ENCODE measurements at regions of chr17 and their contacts with region 1.

Region 1: DNA sequence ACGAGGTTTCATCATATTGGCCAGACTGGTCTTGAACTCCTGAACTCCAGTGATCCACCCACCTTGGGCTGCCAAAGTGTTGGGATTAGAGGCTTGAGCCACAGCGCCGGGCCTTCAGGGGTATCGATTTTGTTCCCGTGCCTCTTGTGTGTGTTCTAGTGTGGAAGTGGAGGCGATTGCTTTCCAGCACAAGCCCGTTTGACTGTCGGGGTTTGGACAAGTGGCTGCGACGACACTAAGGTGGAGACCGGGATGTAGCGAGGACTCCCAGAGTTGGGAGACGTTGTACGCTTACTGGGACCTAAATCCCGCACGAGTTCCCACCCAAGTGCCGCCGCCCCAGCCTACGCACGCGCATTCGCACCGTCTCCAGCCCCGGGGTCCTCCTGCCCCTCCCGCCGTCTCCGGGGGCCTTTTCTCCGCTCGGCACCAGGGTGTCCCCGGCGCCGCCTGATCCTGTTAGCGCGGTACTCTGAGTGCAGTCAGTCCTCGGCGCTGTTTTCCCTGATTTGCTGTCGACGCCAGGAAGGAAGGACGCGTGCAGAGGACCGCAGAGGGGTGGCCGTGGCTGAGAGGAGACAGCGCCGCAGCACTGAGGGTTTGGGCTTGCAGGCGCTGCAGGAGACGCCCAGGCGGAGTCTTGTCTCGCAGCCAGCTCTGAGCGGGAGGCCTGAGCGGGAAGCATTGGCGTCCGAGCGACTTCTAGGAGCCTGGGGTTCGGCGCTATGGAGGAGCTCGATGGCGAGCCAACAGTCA is at the start of gene NUP85:
- DNase-seq: peak; percentile 72
- ATAC-seq: peak; percentile 93
- H3K4me3 ChIP-seq: peak within 1 kb of the TSS; percentile 89 to 95
- H3K27ac ChIP-seq: peak within 1 kb of the TSS; percentile 95
- H3K4me1 ChIP-seq: no peaks in the 10 kb centered on the region
- H3K27me3 ChIP-seq: no peaks in the 10 kb centered on the region
- CTCF ChIP-seq: no peak
- total RNA-seq, gene NUP85: 141 TPM

Region 2: DNA sequence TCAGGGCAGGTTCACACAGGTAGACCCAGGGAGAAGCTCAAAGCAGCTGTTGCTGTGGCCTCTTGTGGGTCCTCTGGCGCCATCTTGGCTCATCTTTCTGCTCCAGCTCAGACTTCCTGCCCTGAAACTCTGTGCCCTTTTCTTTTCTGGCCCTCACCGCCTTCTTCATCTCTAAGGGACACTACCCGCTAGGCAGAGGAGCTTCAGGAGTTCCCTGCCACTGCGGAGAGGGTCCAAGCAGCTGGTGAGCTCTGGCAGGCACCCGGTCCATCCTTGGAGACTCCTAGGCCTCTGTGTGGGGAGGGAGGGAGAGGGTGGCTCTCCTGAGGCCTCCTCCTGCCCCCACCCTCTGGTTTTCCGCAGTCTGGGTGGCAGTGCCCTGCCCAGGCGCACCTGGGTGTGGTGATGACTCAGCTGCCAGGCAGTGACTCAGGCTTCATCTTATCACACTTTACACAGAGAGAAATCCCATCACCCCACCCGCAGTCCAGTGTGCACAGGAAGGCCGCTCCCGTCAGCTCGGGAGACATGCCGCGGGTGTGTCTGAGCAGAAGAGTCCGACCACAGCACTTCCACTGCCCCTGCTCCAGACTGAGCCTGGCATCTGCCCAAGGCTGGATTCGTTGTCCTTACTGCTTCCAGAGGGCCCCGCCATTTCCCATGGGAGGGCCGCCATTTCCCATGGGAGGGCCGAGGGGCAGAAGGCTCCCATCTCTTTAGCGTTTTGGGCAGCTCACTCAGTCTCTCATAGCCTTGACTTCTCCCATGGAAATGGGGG is 81.0 kb before region 1 on chr17:
- CTCF ChIA-PET with region 1: no interaction called
- POLR2A ChIA-PET with region 1: interaction called, 26 read pairs
- in situ Hi-C with region 1: no loop called
- intact Hi-C with region 1: no loop called
- DNase-seq: peak; percentile 89
- ATAC-seq: peak; percentile 94
- H3K4me3 ChIP-seq: no peak overlapping the region
- H3K27ac ChIP-seq: peak overlapping the region; percentile 90
- H3K4me1 ChIP-seq: peaks cover 27% of the 10 kb centered on the region
- H3K27me3 ChIP-seq: no peaks in the 10 kb centered on the region
- CTCF ChIP-seq: no peak

Region 3: GRCh38 chr17:75147878-75148546 is 57.2 kb before region 1 on chr17:
- CTCF ChIA-PET with region 1: no interaction called
- POLR2A ChIA-PET with region 1: no interaction called
- in situ Hi-C with region 1: no loop called
- intact Hi-C with region 1: no loop called
- DNase-seq: no peak
- ATAC-seq: no peak
- H3K4me3 ChIP-seq: no peak overlapping the region
- H3K27ac ChIP-seq: peak overlapping the region; percentile 10; the same call in 1 of the 2 replicates
- H3K4me1 ChIP-seq: peaks cover 3% of the 10 kb centered on the region; the same call in 1 of the 2 replicates
- H3K27me3 ChIP-seq: no peaks in the 10 kb centered on the region
- CTCF ChIP-seq: no peak

Region 4: GRCh38 chr17:75250009-75250471 is 44.8 kb after region 1 on chr17:
- CTCF ChIA-PET with region 1: interaction called, 12 read pairs
- POLR2A ChIA-PET with region 1: no interaction called
- in situ Hi-C with region 1: no loop called
- intact Hi-C with region 1: no loop called
- DNase-seq: no peak
- ATAC-seq: peak; percentile 32; the same call in 1 of the 2 replicates
- H3K4me3 ChIP-seq: no peak overlapping the region
- H3K27ac ChIP-seq: no peak overlapping the region
- H3K4me1 ChIP-seq: no peaks in the 10 kb centered on the region
- H3K27me3 ChIP-seq: no peaks in the 10 kb centered on the region
- CTCF ChIP-seq: no peak